ENCODE measurements at regions of chr9 and their contacts with region 1.

Region 1: GRCh38 chr9:73132034-73132776 is 19.5 kb upstream of the ANXA1 start:
- DNase-seq: peak; percentile 94
- H3K4me3 ChIP-seq: peak overlapping the region; percentile 29 to 92 (median 84)
- H3K27ac ChIP-seq: peak overlapping the region; percentile 95
- H3K4me1 ChIP-seq: peaks cover 27% of the 10 kb centered on the region
- H3K27me3 ChIP-seq: no peaks in the 10 kb centered on the region
- CTCF ChIP-seq: no peak
- POLR2A ChIP-seq: peak; percentile 41

Region 2: DNA sequence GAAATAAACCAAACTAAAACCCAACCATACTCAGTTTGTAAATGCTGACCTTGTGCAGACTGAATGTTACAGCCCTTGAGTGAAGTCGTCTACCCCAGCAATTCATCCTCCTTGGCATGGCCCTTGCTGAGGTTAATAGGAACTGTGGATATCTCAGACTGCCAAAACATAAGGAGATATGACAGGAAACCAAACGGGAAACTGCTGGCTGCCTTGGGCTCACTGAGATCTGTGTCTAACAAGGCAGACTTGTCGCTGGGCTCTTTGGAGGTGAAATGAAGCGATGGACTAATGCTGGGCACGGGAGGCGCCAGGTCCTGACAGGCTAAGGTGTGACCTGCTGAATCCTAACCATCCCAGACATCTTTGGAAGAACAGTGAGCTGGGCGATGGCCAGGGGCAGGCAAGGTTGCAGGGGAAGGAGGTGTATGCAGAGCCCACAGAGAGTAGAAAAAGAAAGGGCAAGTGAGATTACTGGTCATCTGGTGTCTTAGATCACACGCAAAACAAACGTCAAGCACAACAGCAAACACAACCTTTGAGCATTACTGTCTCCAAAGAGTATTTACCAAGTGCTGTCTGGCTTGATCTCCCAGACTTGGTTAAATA is 134.7 kb before region 1 on chr9:
- CTCF ChIA-PET with region 1: no interaction called
- POLR2A ChIA-PET with region 1: no interaction called
- dilution Hi-C with region 1: no loop called
- intact Hi-C with region 1: loop called (anchors 1 kb)
- DNase-seq: peak; percentile 89
- H3K4me3 ChIP-seq: peak overlapping the region in 2 of 3 experiments; percentile 17 to 57
- H3K27ac ChIP-seq: peak overlapping the region; percentile 100
- H3K4me1 ChIP-seq: peaks cover 38% of the 10 kb centered on the region
- H3K27me3 ChIP-seq: no peaks in the 10 kb centered on the region
- CTCF ChIP-seq: no peak
- POLR2A ChIP-seq: peak; percentile 71

Region 3: DNA sequence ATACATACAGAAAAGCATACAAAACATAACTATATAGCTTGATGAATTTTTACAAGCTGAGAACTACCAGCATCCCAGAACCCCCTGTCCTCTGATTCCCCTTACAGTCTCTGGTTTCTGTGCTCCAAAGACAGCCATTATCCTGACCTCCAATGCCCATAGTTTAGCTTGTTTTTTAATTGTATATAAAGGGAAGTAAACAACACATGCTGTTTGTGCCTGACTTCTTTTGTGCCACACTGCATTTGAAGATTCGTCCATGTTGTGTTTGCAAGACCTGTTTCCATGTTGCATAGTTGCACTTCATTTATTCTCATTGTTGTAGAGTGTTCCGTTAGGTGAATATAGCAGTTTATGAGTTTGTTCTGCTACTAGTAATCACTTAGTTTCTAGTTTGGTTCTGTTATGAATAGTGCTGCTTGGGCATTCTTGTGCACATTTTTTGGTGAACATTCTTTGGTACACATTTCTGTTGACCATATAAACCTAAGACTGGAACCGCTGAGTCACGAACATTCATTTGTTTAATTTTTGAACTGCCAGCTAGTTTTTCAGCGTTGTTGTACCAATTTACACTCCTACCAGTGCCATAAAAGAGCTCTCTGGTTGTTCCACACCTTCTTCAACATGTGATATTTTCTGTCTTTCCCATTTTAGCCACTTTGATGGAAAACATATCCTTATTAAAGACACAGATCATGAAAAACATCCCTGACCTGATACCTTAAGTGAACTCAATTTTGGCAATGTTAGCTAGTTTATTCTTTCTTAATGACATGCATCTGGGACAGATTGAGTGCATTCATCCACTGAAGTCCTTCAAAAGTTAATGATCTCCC is 58.6 kb before region 1 on chr9:
- CTCF ChIA-PET with region 1: no interaction called
- POLR2A ChIA-PET with region 1: no interaction called
- dilution Hi-C with region 1: no loop called
- intact Hi-C with region 1: loop called (anchors 2 kb)
- DNase-seq: no peak
- H3K4me3 ChIP-seq: no peak overlapping the region
- H3K27ac ChIP-seq: peak overlapping the region; percentile 82
- H3K4me1 ChIP-seq: peaks cover 20% of the 10 kb centered on the region
- H3K27me3 ChIP-seq: no peaks in the 10 kb centered on the region
- CTCF ChIP-seq: no peak
- POLR2A ChIP-seq: no peak

Region 4: GRCh38 chr9:73143606-73144328 is 11.6 kb after region 1 on chr9:
- CTCF ChIA-PET with region 1: interaction called, 15 read pairs
- POLR2A ChIA-PET with region 1: no interaction called
- dilution Hi-C with region 1: no loop called
- intact Hi-C with region 1: loop called (anchors 1 kb)
- DNase-seq: peak; percentile 70
- H3K4me3 ChIP-seq: no peak overlapping the region
- H3K27ac ChIP-seq: peak overlapping the region; percentile 71
- H3K4me1 ChIP-seq: peaks cover 26% of the 10 kb centered on the region
- H3K27me3 ChIP-seq: no peaks in the 10 kb centered on the region
- CTCF ChIP-seq: no peak
- POLR2A ChIP-seq: no peak

Region 5: GRCh38 chr9:73149371-73150067 is 17.3 kb after region 1 on chr9:
- CTCF ChIA-PET with region 1: interaction called, 15 read pairs
- POLR2A ChIA-PET with region 1: no interaction called
- dilution Hi-C with region 1: no loop called
- intact Hi-C with region 1: loop called (anchors 1 kb)
- DNase-seq: peak; percentile 88
- H3K4me3 ChIP-seq: peak overlapping the region in 1 of 3 experiments; percentile 23
- H3K27ac ChIP-seq: peak overlapping the region; percentile 77
- H3K4me1 ChIP-seq: peaks cover 44% of the 10 kb centered on the region
- H3K27me3 ChIP-seq: no peaks in the 10 kb centered on the region
- CTCF ChIP-seq: no peak
- POLR2A ChIP-seq: no peak